ENCODE measurements at regions of chrX and their contacts with region 1.

Region 1: DNA sequence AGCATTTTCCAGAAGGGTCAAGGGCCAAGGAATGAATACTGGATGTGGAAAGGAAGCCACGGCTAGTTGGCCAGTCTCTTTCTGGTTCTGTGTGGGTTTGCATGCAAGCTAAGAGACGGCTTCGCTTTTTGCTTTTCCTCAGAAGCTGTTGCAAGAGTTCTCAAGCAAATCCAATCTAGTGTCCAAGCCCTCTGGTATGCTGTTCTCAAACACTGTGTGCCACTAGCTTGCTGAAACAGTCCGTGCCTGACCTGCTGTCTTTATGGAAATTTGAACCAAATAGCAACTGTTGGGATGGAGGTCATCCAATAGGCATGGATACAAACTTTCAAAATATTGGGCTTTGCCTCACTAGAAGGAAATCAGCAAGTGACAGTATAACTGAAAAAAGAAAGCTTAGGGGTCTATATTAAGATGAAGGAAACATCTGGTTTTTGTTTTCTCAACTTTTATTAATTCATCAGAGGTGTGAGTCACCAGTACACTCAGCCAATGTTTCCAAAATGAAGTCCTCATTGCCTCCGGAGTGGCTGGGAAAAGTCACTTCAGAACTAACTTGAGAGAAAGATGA is 70.5 kb downstream of the SLC9A6 start:
- DNase-seq: no peak
- H3K4me3 Mint-ChIP-seq: no peak overlapping the region
- H3K27ac Mint-ChIP-seq: no peak overlapping the region
- H3K4me1 Mint-ChIP-seq: peaks cover 12% of the 10 kb centered on the region
- H3K27me3 Mint-ChIP-seq: no peaks in the 10 kb centered on the region

Region 2: GRCh38 chrX:134753718-134754008 is 1302.1 kb before region 1 on chrX:
- CTCF ChIA-PET with region 1: no interaction called
- POLR2A ChIA-PET with region 1: no interaction called
- intact Hi-C with region 1: no loop called
- DNase-seq: no peak
- H3K4me3 Mint-ChIP-seq: no peak overlapping the region
- H3K27ac Mint-ChIP-seq: no peak overlapping the region
- H3K4me1 Mint-ChIP-seq: no peaks in the 10 kb centered on the region
- H3K27me3 Mint-ChIP-seq: peaks cover 3% of the 10 kb centered on the region

Region 3: GRCh38 chrX:136076942-136077341 is 21.2 kb after region 1 on chrX:
- CTCF ChIA-PET with region 1: no interaction called
- POLR2A ChIA-PET with region 1: no interaction called
- intact Hi-C with region 1: no loop called
- DNase-seq: no peak
- H3K4me3 Mint-ChIP-seq: no peak overlapping the region
- H3K27ac Mint-ChIP-seq: no peak overlapping the region
- H3K4me1 Mint-ChIP-seq: no peaks in the 10 kb centered on the region
- H3K27me3 Mint-ChIP-seq: peaks cover 2% of the 10 kb centered on the region

Region 4: GRCh38 chrX:136147315-136147901 is 91.7 kb after region 1 on chrX and contains the start of gene FHL1:
- CTCF ChIA-PET with region 1: no interaction called
- POLR2A ChIA-PET with region 1: no interaction called
- intact Hi-C with region 1: loop called (anchors 5 kb)
- DNase-seq: peak; percentile 68
- H3K4me3 Mint-ChIP-seq: peak within 1 kb of the TSS; percentile 78
- H3K27ac Mint-ChIP-seq: peak within 1 kb of the TSS; percentile 63
- H3K4me1 Mint-ChIP-seq: peaks cover 43% of the 10 kb centered on the region
- H3K27me3 Mint-ChIP-seq: no peaks in the 10 kb centered on the region
- total RNA-seq, gene FHL1: 33.9 to 37.5 TPM

Region 5: GRCh38 chrX:136295380-136295779 is 239.6 kb after region 1 on chrX:
- CTCF ChIA-PET with region 1: no interaction called
- POLR2A ChIA-PET with region 1: no interaction called
- intact Hi-C with region 1: no loop called
- DNase-seq: no peak
- H3K4me3 Mint-ChIP-seq: no peak overlapping the region
- H3K27ac Mint-ChIP-seq: no peak overlapping the region
- H3K4me1 Mint-ChIP-seq: no peaks in the 10 kb centered on the region
- H3K27me3 Mint-ChIP-seq: peaks cover 2% of the 10 kb centered on the region

Region 6: GRCh38 chrX:136847876-136848337 is 792.2 kb after region 1 on chrX:
- CTCF ChIA-PET with region 1: no interaction called
- POLR2A ChIA-PET with region 1: no interaction called
- intact Hi-C with region 1: no loop called
- DNase-seq: no peak
- H3K4me3 Mint-ChIP-seq: no peak overlapping the region
- H3K27ac Mint-ChIP-seq: peak overlapping the region; percentile 5
- H3K4me1 Mint-ChIP-seq: peaks cover 6% of the 10 kb centered on the region
- H3K27me3 Mint-ChIP-seq: no peaks in the 10 kb centered on the region

Measured in activated CD4-positive, alpha-beta memory T cell treated with anti-CD3 and anti-CD28 coated beads for 36 hours (primary cell).